ENCODE measurements at regions of chr3 and their contacts with region 1.

Region 1: DNA sequence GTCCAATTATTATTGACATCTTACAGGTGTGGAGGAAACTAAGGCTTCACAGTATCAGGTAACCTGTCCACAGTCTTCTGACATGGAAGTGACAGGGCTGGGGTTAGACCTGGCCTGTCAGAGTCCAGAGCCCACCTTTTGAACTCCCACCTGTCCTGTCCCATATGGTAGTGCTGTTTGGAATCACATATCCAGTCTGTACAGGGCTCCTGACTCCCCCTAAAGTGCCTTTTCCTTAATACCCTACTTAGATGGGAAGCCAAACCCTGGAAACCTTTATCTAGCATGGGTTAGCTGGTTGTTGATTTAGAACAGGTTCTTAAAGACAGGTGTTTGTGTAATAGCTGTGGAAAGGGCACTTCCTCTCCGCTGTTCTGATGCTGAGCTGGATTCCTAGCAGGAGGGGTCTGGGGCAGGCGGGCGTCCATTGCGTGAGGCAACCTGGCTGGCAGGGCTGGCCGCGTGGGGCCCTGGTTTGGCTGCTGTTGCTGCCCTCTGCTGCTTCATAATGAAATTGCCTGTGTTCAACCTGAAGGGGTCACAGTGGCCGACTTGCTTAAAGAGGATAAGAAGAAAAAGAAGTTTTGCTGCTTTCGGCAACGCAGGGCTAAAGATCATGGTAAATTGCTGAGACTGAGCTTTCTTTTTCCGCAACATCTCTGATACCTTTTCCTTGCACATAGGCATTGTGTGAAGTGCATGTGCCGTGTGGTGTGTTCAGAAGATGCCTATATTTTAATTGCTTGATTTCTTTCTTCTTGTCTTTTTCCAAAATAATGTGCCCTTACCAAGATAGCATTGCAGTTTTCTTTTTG is 136.2 kb downstream of the CHDH start:
- DNase-seq: peak; percentile 80
- H3K4me3 Mint-ChIP-seq: no peak overlapping the region
- H3K27ac Mint-ChIP-seq: no peak overlapping the region
- H3K4me1 Mint-ChIP-seq: peaks cover 11% of the 10 kb centered on the region
- H3K27me3 Mint-ChIP-seq: no peaks in the 10 kb centered on the region
- CTCF ChIP-seq: peak; percentile 66

Region 2: DNA sequence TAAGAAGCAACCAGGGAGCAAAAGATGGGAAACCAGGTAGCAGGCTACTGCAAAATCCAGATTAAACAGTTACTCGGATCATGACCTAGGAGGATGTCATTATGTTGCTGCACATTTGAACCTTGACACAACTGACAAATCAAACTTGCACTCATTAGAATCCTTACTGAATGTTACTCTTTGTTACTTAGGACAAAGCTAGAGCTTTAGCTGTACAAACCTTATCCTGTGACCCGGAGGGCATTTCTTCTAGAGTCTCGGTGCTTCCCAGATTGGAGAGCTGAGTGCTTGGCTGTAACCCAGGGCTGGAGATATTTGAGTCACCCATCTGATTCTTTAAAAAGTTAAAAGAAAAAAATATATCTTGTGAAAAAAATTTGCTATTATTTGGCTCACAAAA is 406.1 kb before region 1 on chr3:
- CTCF ChIA-PET with region 1: no interaction called
- intact Hi-C with region 1: loop called (anchors 2 kb)
- DNase-seq: no peak
- H3K4me3 Mint-ChIP-seq: no peak overlapping the region
- H3K27ac Mint-ChIP-seq: no peak overlapping the region
- H3K4me1 Mint-ChIP-seq: no peaks in the 10 kb centered on the region
- H3K27me3 Mint-ChIP-seq: no peaks in the 10 kb centered on the region
- CTCF ChIP-seq: no peak

Region 3: GRCh38 chr3:53375019-53375418 is 335.0 kb before region 1 on chr3:
- CTCF ChIA-PET with region 1: interaction called, 9 read pairs
- intact Hi-C with region 1: loop called (anchors 1 kb)
- DNase-seq: peak; percentile 85
- H3K4me3 Mint-ChIP-seq: no peak overlapping the region
- H3K27ac Mint-ChIP-seq: peak overlapping the region; percentile 68
- H3K4me1 Mint-ChIP-seq: no peaks in the 10 kb centered on the region
- H3K27me3 Mint-ChIP-seq: no peaks in the 10 kb centered on the region
- CTCF ChIP-seq: peak; percentile 81

Region 4: DNA sequence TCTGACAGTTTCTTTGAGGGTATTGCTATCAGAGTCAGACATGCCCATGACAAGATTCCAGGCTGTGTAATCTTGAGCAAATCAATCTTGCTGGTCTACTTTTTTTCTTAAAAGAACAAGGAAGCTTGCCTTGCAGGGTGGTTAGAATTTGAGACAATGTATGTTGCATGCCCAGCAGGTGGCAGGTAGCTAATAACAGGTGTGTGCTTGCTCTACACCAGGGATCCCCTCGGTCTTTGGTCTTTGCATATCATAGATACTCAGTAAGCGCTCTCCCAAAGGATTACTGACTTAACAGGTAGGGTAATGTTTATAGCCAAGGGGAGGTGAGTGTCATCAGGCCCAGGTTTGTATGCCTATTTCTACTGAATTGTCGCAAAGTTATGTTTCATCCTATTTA is 178.3 kb before region 1 on chr3:
- CTCF ChIA-PET with region 1: interaction called, 5 read pairs
- intact Hi-C with region 1: loop called (anchors 1 kb)
- DNase-seq: peak; percentile 57
- H3K4me3 Mint-ChIP-seq: no peak overlapping the region
- H3K27ac Mint-ChIP-seq: no peak overlapping the region
- H3K4me1 Mint-ChIP-seq: peaks cover 17% of the 10 kb centered on the region
- H3K27me3 Mint-ChIP-seq: no peaks in the 10 kb centered on the region
- CTCF ChIP-seq: peak; percentile 35

Region 5: DNA sequence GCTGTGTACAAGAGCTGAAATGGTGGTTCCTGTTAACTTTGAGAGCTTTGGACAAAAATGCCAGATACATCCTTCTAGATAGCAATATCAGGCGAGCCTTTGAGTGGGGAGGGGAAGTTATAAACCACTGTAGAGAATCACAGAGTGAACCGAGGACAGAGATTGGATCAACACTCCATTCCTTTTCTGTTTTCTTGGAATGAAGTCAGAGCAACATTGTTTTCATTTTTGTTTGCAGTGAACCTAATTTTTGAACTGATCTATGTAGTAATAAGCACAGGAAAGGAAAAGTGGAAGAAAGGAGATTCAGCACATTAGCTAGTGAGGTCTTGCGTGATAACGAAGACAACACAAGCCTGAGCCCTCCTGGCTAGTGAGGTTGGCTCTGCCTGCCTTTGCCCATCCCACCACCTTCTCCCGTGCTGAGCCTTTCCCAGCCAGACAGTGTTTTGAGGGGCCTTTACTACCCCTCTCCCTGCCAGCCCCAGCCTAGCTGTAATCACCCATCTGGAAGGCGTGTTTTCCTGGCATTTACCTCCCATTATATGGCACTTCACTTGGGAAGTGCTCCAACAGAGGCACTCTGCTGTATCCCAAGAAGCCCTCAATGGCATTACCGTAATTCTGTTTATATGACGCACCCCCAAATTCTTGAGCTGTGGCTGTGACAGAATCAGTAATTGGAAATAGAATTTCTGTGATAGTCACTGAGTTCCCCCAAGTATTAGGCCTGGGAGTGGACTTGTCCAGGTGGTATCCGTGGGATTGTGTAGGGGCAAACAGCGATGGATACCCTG is 85.8 kb before region 1 on chr3:
- CTCF ChIA-PET with region 1: no interaction called
- intact Hi-C with region 1: loop called (anchors 5 kb)
- DNase-seq: no peak
- H3K4me3 Mint-ChIP-seq: no peak overlapping the region
- H3K27ac Mint-ChIP-seq: no peak overlapping the region
- H3K4me1 Mint-ChIP-seq: peaks cover 35% of the 10 kb centered on the region
- H3K27me3 Mint-ChIP-seq: no peaks in the 10 kb centered on the region
- CTCF ChIP-seq: no peak

Region 6: DNA sequence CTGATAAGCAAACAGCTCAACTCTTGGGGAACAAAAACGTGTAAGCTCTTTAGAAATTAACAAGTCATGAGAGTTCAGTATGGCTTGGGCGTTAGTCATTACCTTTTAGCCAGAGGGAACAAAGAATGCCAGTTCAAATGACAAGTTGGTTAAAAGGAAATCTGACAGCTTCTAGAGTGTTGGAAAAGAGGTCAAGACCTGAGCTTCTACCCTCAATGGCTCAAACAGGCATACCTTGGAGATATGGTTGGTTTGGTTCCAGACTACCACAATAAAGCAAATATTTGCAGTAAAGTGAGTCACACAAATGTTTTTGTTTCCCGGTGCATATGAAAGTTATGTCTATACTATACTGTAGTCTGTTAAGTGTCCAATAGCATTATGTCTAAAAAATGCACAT is 79.5 kb before region 1 on chr3:
- CTCF ChIA-PET with region 1: interaction called, 3 read pairs
- intact Hi-C with region 1: loop called (anchors 5 kb)
- DNase-seq: peak; percentile 50
- H3K4me3 Mint-ChIP-seq: peak overlapping the region; percentile 31
- H3K27ac Mint-ChIP-seq: peak overlapping the region; percentile 89
- H3K4me1 Mint-ChIP-seq: peaks cover 54% of the 10 kb centered on the region
- H3K27me3 Mint-ChIP-seq: no peaks in the 10 kb centered on the region
- CTCF ChIP-seq: no peak

Region 7: GRCh38 chr3:53643757-53644156 is 66.3 kb before region 1 on chr3:
- CTCF ChIA-PET with region 1: no interaction called
- intact Hi-C with region 1: no loop called
- DNase-seq: no peak
- H3K4me3 Mint-ChIP-seq: no peak overlapping the region
- H3K27ac Mint-ChIP-seq: no peak overlapping the region
- H3K4me1 Mint-ChIP-seq: peaks cover 47% of the 10 kb centered on the region
- H3K27me3 Mint-ChIP-seq: no peaks in the 10 kb centered on the region
- CTCF ChIP-seq: no peak

Region 8: DNA sequence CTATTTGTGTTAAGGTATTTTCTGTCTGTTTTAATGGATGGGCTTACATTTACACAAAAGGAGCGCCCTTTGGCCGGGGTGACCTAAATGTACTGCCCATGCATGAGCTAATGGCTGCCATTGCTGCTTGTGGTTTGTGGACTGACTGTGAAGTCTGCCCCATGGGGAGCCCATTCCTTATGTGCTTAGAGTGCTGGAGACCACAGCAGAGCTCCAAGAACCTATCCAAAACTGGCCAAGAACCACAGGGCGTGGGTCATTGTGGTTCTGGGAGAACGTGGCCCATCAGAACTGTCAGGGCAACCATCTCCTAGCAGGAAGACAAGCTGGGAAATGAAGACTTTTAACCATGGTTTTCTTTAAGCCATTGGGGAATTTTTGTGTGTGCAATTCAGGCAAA is 30.9 kb after region 1 on chr3:
- CTCF ChIA-PET with region 1: no interaction called
- intact Hi-C with region 1: no loop called
- DNase-seq: no peak
- H3K4me3 Mint-ChIP-seq: no peak overlapping the region
- H3K27ac Mint-ChIP-seq: no peak overlapping the region
- H3K4me1 Mint-ChIP-seq: no peaks in the 10 kb centered on the region
- H3K27me3 Mint-ChIP-seq: no peaks in the 10 kb centered on the region
- CTCF ChIP-seq: no peak

Region 9: DNA sequence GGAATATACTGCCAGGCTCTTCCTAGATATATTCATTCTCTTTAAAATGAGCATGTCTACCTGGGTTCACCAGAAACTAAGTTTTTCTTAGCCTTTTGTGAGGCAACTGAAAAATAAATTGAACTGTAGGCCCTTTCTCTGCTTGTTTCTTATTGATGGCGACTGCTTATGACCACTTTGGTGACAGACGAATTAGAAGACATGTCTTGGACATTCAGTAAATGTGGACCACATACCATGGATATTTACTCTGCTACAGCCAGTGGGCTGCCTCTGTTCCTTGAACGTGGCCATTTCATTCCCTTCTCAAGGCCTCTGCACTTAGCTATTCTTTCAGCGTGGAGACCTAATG is 182.2 kb after region 1 on chr3:
- CTCF ChIA-PET with region 1: no interaction called
- intact Hi-C with region 1: no loop called
- DNase-seq: no peak
- H3K4me3 Mint-ChIP-seq: peak overlapping the region; percentile 91
- H3K27ac Mint-ChIP-seq: peak overlapping the region; percentile 99
- H3K4me1 Mint-ChIP-seq: peaks cover 31% of the 10 kb centered on the region
- H3K27me3 Mint-ChIP-seq: peaks cover 13% of the 10 kb centered on the region
- CTCF ChIP-seq: no peak